WTC11 (cell line): ENCODE measurements at regions of chr11 and their contacts with region 1.

Region 1: GRCh38 chr11:9748361-9748970 is 84.6 kb downstream of the SWAP70 start:
- DNase-seq: peak; percentile 52
- ATAC-seq: peak; percentile 93
- H3K4me3 Mint-ChIP-seq: no peak overlapping the region
- H3K27ac Mint-ChIP-seq: peak overlapping the region; percentile 64; the same call in 1 of the 2 replicates
- H3K4me1 Mint-ChIP-seq: peaks cover 15% of the 10 kb centered on the region
- H3K27me3 Mint-ChIP-seq: no peaks in the 10 kb centered on the region
- CTCF ChIP-seq: peak; percentile 18; the same call in 1 of the 2 replicates

Region 2: GRCh38 chr11:9601037-9601875 is 147.2 kb before region 1 on chr11:
- CTCF ChIA-PET with region 1: interaction called, 25 read pairs
- POLR2A ChIA-PET with region 1: interaction called, 5 read pairs
- DNase-seq: peak; percentile 36
- ATAC-seq: peak; percentile 91
- H3K4me3 Mint-ChIP-seq: 0 out of 2 replicates have a peak overlapping the region, but pooled peaks have one; percentile 3
- H3K27ac Mint-ChIP-seq: peak overlapping the region; percentile 90
- H3K4me1 Mint-ChIP-seq: peaks cover 24% of the 10 kb centered on the region
- H3K27me3 Mint-ChIP-seq: no peaks in the 10 kb centered on the region
- CTCF ChIP-seq: no peak

Region 3: GRCh38 chr11:9606809-9607510 is 141.5 kb before region 1 on chr11:
- CTCF ChIA-PET with region 1: interaction called, 25 read pairs
- POLR2A ChIA-PET with region 1: no interaction called
- DNase-seq: peak; percentile 53
- ATAC-seq: peak; percentile 92
- H3K4me3 Mint-ChIP-seq: no peak overlapping the region
- H3K27ac Mint-ChIP-seq: 0 out of 2 replicates have a peak overlapping the region, but pooled peaks have one; percentile 6
- H3K4me1 Mint-ChIP-seq: peaks cover 32% of the 10 kb centered on the region
- H3K27me3 Mint-ChIP-seq: no peaks in the 10 kb centered on the region
- CTCF ChIP-seq: no peak

Region 4: DNA sequence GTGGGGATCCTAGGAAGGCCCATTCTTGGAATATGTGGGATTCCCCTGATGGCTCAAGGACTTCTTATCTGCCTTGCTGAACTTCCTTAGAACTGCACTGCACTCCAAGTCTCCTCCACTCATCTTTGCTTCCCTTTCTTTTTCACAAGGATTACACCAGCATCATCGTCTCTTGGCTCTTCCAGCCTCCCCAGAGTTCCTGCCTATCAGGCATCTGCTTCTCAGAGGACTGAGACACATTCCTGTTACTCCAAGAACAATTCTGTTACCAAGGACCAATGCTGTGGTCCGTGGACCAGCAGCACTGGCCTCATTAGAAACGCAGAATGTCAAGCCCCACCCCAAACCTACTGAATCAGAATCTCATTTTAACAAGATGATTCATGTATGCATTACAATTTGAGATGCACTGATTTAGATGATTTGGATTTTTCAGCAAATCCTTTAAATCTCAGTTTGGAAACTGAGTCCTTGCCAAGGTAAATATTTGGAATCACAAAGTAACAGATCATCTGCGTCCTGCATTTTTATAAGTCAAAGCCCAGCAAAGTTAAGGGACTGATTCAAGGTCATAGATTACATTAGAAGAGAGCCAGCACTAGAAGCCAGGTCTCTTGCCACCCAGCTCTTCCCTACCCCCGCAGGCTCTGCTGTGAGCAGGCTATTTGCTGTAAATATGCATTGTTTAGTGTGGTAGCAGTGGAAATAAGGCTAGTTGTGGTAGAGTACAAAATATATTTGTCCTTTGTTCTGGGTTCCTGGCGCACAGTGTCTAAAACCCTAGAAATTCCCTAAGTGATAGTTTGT is 26.3 kb after region 1 on chr11:
- CTCF ChIA-PET with region 1: no interaction called
- POLR2A ChIA-PET with region 1: no interaction called
- DNase-seq: no peak
- ATAC-seq: no peak; the same call in 1 of the 2 replicates
- H3K4me3 Mint-ChIP-seq: no peak overlapping the region
- H3K27ac Mint-ChIP-seq: no peak overlapping the region
- H3K4me1 Mint-ChIP-seq: peaks cover 35% of the 10 kb centered on the region
- H3K27me3 Mint-ChIP-seq: no peaks in the 10 kb centered on the region
- CTCF ChIP-seq: no peak

Region 5: DNA sequence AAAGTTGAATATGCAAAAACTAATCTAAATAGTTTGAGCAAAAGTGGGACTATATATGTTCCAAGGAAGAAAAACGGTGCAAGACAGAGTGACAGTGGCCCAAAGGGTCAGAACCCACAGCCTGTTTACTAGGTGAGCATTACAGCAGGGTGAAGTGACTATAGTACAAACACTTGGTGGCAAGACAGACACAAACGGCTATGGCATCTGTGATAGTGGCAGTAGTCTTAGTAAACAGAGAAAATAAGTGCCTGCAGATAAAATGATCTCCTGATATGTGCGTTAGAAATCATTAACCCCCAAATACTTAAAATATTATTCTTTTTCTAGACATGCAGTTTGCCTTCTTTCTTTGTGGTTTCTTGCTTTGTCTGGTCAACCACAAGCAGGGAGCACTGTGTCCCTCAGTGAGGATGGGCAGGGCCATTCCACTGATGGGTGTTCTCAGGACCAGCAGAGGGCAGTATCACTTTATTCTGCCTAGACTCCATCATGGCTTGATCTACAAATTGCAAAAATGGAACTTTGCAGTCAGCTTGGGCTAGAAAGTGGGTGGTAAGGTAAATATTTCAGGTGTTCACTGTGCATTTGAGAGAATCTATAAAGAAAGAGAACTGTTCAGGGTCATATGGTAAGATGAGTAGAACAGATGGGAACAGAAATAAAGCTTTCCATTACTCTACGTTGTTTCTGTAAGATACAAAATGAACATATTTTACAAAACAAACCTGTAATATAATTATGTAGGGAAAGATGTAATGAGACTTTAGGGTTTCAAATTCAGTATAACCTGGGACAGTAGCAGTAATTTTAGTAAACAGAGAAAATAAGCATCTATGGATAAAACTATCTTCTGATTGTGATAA is 113.6 kb after region 1 on chr11:
- CTCF ChIA-PET with region 1: no interaction called
- POLR2A ChIA-PET with region 1: no interaction called
- DNase-seq: peak; percentile 60
- ATAC-seq: peak; percentile 87
- H3K4me3 Mint-ChIP-seq: no peak overlapping the region
- H3K27ac Mint-ChIP-seq: no peak overlapping the region
- H3K4me1 Mint-ChIP-seq: peaks cover 47% of the 10 kb centered on the region
- H3K27me3 Mint-ChIP-seq: no peaks in the 10 kb centered on the region
- CTCF ChIP-seq: peak; percentile 74

Region 6: GRCh38 chr11:9906043-9906791 is 157.8 kb after region 1 on chr11:
- CTCF ChIA-PET with region 1: no interaction called
- POLR2A ChIA-PET with region 1: no interaction called
- DNase-seq: no peak
- ATAC-seq: peak; percentile 85
- H3K4me3 Mint-ChIP-seq: no peak overlapping the region
- H3K27ac Mint-ChIP-seq: peak overlapping the region; percentile 97
- H3K4me1 Mint-ChIP-seq: peaks cover 62% of the 10 kb centered on the region
- H3K27me3 Mint-ChIP-seq: no peaks in the 10 kb centered on the region
- CTCF ChIP-seq: no peak

Region 7: GRCh38 chr11:10455637-10456487 is 707.4 kb after region 1 on chr11:
- CTCF ChIA-PET with region 1: no interaction called
- POLR2A ChIA-PET with region 1: no interaction called
- DNase-seq: peak; percentile 35
- ATAC-seq: peak; percentile 60
- H3K4me3 Mint-ChIP-seq: no peak overlapping the region
- H3K27ac Mint-ChIP-seq: peak overlapping the region; percentile 53
- H3K4me1 Mint-ChIP-seq: peaks cover 34% of the 10 kb centered on the region
- H3K27me3 Mint-ChIP-seq: peaks cover 20% of the 10 kb centered on the region
- CTCF ChIP-seq: no peak